Right ventricle myocardium superior (tissue), 1 donor: ENCODE measurements at regions of chr9 and their contacts with region 1.

Region 1: GRCh38 chr9:5529683-5530221 is 19.4 kb downstream of the PDCD1LG2 start:
- DNase-seq: no peak
- ATAC-seq: no peak

Region 2: DNA sequence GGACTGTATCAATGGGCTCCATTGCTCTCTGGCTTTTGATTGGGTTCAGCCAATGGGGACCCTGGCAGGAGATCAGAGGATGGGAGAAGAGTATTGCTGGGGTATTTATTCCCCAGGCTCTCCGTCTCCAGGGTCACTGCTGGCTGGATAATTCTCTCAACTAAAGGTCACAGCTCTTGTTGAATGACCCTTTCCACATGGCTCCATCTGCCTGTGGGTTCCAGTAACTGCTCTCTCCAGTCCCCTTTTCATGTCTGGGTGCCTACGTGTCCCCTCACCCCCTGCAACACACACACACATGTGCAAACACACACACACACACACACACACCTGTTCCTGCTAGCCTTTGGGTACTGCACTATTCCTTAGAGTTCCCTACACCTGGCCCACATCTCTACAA is 45.2 kb after region 1 on chr9:
- intact Hi-C with region 1: loop called (anchors 10 kb)
- DNase-seq: no peak
- ATAC-seq: peak; percentile 29

Region 3: DNA sequence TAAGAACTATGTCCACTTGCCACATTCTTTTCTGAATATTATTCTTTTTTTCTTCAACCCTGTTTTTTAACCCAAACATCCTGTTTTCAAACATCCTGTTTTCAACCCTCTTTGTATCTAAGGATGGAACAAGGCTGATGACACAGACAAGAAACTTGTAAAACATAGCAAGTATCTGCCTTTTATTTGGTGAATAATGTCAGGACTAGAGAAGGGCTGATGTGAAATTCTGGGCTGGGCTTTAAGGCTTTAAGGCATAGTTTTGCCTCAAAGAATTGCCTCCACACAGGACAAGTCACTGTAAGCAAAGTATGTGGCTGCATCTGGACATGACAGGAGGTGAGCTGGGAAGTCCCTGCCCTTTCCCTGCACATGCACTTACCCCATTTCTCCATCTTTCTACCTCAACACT is 56.6 kb after region 1 on chr9:
- intact Hi-C with region 1: no loop called
- DNase-seq: no peak
- ATAC-seq: no peak

Region 4: DNA sequence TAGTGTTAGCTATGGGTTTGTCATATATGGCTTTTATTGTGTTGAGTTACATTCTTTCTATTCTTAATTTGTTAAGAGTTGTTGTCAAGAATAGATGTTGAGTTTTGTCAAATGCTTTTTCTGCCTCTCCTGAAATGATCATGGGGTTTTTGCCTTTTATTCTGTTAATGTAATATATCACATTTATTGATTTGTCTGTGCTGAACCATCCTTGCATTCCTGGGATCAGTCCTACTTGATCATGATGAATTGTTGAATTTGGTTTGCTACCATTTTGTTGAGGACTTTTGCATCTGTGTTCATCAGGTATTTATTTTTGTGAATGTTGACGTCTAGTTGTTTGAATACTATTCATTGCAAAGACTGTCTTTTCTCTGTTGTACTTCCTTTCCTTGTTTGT is 123.1 kb after region 1 on chr9:
- intact Hi-C with region 1: no loop called
- DNase-seq: no peak
- ATAC-seq: no peak